Activated CD4-positive, alpha-beta memory T cell treated with anti-CD3 and anti-CD28 coated beads for 36 hours (primary cell): ENCODE measurements at regions of chr3 and their contacts with region 1.

Region 1: GRCh38 chr3:115658337-115659181 is 35.2 kb downstream of the GAP43 start:
- DNase-seq: peak; percentile 86
- H3K4me3 Mint-ChIP-seq: peak overlapping the region; percentile 82
- H3K27ac Mint-ChIP-seq: peak overlapping the region; percentile 92
- H3K4me1 Mint-ChIP-seq: peaks cover 40% of the 10 kb centered on the region
- H3K27me3 Mint-ChIP-seq: no peaks in the 10 kb centered on the region

Region 2: DNA sequence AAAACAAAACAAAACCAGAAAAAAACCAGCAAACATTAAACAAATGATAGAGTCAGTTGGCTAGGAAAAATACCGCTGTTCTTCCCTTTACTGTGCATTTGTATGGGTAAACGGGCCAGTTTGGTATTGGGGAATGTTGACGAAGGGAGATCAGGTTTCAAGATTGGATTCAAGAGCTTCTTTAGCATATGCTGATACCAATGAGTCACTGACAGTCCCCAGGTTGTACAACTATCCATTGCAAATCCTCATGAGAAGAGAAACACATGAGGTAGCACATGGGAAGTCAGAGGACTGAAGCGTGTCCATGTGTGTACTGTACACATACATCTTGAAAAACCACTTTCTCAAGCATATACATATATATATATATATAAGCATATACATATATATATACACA is 1339.1 kb before region 1 on chr3:
- CTCF ChIA-PET with region 1: no interaction called
- POLR2A ChIA-PET with region 1: no interaction called
- intact Hi-C with region 1: loop called (anchors 10 kb)
- DNase-seq: no peak
- H3K4me3 Mint-ChIP-seq: no peak overlapping the region
- H3K27ac Mint-ChIP-seq: no peak overlapping the region
- H3K4me1 Mint-ChIP-seq: peaks cover 85% of the 10 kb centered on the region
- H3K27me3 Mint-ChIP-seq: no peaks in the 10 kb centered on the region

Region 3: DNA sequence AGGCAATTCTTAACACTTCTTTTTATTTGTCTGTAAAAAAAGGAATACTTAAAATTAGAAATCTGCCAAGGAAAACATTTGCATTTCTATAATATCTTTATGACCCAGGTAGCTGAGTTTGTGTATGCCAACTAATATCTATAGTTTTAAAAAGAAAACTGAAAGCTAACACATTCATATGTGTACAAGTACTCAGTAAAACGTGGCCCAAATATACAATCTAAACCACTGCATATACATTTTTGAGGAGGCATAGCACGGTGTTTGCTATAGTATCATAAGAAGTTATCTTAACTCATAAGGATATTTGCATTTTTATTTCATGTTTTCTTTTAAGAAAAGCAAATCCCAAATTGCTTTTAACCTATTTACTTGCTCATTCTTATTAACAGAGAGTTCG is 684.2 kb before region 1 on chr3:
- CTCF ChIA-PET with region 1: no interaction called
- POLR2A ChIA-PET with region 1: no interaction called
- intact Hi-C with region 1: no loop called
- DNase-seq: no peak
- H3K4me3 Mint-ChIP-seq: no peak overlapping the region
- H3K27ac Mint-ChIP-seq: no peak overlapping the region
- H3K4me1 Mint-ChIP-seq: peaks cover 5% of the 10 kb centered on the region
- H3K27me3 Mint-ChIP-seq: no peaks in the 10 kb centered on the region

Region 4: DNA sequence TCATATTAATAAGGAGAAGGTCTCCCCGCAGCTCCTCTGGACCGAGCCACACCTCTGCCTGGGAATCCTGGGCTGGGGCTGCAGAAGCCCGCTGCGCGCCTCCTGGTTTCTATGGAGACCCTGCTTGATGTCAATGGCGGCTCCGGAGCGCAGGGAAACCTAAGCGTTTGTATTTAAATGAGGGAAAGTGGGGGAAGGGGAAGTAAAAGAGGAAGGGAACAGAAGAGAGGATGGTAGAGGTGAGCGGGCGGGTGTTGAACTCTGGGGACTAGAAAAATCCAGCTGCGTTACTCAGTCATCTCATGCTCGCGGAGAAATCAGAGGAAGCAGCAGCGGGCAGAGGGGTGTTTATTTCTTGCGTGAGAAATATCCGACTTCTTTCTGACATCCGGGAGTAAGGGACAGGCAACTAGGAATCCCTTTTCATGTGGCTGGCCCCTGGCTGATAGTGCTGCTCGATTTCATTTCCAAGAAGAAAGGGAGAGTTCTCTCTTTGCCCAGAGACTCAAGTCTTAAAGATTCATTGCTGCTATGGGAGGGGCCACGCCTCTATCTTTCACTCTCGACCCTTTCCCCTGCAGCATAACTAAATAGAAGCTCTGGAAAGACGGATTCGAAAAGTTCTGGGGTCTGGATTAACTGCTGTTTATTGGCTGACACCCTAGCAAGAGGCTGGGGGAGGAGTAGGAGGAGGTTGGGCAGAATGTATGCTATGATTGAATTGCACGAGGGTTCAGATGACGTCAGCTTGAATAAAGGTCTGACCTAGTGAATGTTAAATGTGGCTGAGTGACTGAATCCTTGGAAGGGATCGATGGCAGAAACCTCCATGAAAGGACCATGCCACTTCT is 145.8 kb before region 1 on chr3:
- CTCF ChIA-PET with region 1: no interaction called
- POLR2A ChIA-PET with region 1: no interaction called
- intact Hi-C with region 1: loop called (anchors 10 kb)
- DNase-seq: peak; percentile 40
- H3K4me3 Mint-ChIP-seq: peak overlapping the region; percentile 79
- H3K27ac Mint-ChIP-seq: no peak overlapping the region
- H3K4me1 Mint-ChIP-seq: peaks cover 13% of the 10 kb centered on the region
- H3K27me3 Mint-ChIP-seq: peaks cover 14% of the 10 kb centered on the region

Region 5: DNA sequence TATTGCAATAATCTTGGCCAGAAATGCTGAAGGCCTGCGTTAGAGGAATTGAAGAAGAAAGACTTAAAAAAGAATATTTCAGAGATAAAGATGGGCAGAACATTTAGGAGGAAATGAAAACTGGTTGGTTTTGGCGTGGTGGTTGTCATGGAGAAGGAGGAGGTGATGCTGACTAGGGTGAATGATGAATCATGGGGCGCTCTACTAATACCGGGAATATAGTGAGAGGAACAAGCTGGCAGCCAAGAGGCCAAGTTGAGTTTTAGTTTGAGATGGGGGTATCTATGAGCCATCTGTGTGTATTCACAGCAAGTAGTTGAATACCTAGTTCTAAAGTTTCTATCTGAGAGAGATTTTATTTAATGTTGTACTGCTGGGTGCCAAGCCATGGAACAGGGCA is 42.1 kb before region 1 on chr3:
- CTCF ChIA-PET with region 1: no interaction called
- POLR2A ChIA-PET with region 1: no interaction called
- intact Hi-C with region 1: loop called (anchors 1 kb)
- DNase-seq: peak; percentile 67
- H3K4me3 Mint-ChIP-seq: no peak overlapping the region
- H3K27ac Mint-ChIP-seq: no peak overlapping the region
- H3K4me1 Mint-ChIP-seq: peaks cover 23% of the 10 kb centered on the region
- H3K27me3 Mint-ChIP-seq: peaks cover 10% of the 10 kb centered on the region

Region 6: GRCh38 chr3:115648559-115648958 is 10.0 kb before region 1 on chr3:
- CTCF ChIA-PET with region 1: no interaction called
- POLR2A ChIA-PET with region 1: no interaction called
- intact Hi-C with region 1: no loop called
- DNase-seq: no peak
- H3K4me3 Mint-ChIP-seq: no peak overlapping the region
- H3K27ac Mint-ChIP-seq: no peak overlapping the region
- H3K4me1 Mint-ChIP-seq: no peaks in the 10 kb centered on the region
- H3K27me3 Mint-ChIP-seq: peaks cover 6% of the 10 kb centered on the region